ENCODE measurements at regions of chr9 and their contacts with region 1.

Region 1: GRCh38 chr9:34376596-34377403 is at the start of gene MYORG:
- DNase-seq: peak; percentile 97
- total RNA-seq, gene MYORG: 12.0 to 30.6 TPM

Region 2: DNA sequence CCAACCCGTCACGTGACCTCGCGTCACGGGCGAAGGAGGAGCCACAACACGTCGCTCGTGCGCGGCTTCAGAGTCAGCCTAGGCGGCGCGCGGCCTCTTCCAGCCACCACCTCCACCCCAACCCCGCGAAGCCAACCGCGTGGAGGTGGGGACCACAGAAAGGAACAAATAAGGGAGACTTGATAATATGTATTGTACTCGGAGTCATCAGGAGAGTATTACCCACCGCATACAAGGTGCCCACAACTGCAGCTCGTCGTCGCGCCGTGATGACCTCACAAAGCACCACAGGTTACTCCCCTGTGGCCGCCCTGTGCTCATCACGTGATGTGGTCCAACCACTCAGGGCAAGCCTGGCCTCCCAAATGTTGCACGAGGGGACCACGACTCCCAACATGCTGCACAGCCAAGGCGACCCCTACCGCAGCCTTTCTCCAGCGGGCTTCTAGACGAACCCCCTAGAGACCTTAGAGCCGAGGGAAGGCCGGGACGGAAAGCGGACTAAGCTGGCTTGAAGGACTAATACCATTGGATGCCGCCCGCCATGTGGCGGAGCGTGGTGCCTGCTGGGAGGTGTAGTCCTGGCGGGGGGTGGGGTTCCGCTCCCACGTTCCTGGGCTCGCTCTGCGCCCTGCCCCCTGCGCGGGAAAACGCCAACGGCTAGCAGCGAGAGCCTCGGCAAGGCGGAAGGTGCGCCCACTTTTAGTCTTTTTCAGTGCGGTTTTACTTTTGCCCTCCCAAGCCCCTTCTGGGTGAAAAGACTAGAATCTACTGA is 327.7 kb before region 1 on chr9:
- intact Hi-C with region 1: loop called in 1 of 2 experiments (anchors 5 kb)
- DNase-seq: peak; percentile 99

Region 3: GRCh38 chr9:34218446-34218845 is 158.4 kb before region 1 on chr9:
- intact Hi-C with region 1: no loop called
- DNase-seq: no peak

Region 4: DNA sequence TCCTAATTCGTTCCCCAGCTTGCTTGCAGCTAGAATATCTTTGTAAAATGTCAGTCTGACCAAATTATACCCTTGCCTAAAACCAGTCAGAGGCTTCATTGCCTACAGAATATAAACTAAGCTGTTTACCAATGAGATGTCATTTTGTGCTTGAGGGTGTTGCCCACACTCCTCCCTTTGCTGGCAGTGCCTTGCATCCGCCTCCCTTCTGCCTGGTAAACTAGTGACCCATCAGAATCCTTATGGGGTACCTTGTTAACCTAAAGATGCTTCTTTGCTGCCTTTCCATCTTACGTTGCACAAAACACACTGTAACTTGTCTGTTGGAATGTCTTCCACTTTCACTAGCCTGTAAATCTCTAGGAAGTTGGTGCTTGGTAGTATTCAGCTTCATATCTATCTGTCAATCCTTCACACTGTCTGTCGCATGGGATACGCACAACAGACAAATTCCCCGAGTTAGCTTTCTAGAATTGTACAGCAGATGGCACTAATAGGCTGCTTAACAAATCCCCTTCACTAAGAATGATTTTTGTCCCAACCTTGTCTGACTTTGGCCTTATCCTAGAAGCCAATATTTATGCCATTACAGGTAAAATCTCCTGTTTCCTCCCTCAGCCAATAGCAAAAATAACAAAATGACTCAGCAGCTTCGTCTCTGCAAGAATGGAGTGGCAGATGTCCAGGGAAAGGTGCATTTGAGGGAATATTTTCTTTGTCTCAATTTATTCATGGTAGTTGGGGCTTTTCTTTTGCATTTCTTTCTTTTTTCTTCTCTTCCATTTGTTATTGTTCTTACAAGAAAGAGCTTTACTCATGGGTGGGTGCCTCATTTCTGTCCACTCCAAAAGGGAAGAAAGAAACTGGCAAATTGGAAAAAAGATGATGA is 44.5 kb before region 1 on chr9:
- intact Hi-C with region 1: loop called in 1 of 2 experiments (anchors 2 kb)
- DNase-seq: no peak

Region 5: DNA sequence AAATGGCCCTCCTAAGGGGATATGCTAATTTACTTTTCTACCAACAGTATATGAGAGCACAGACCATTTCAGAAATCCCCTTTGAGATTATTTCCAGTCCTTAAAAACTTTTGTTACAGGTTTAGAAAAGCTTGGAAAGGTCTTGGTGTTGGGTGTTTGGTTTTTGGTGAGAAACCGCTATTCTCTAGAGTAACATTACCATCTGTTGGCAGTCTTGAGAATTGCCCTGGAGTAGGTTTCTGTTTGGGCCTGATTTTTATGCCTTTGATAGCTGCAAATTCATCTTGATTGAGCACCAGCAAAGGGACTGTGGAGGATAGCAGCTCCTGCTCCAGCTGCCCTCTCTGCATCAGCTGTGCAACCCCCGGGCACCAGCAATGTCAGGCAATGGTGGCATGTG is 39.4 kb before region 1 on chr9:
- intact Hi-C with region 1: loop called (anchors 2 kb)
- DNase-seq: no peak

Measured in posterior vena cava (tissue), 2 donors.